Activated B cell treated with CpG ODN at 0.5 μM for 24 hours (primary cell): ENCODE measurements at regions of chr10 and their contacts with region 1.

Region 1: DNA sequence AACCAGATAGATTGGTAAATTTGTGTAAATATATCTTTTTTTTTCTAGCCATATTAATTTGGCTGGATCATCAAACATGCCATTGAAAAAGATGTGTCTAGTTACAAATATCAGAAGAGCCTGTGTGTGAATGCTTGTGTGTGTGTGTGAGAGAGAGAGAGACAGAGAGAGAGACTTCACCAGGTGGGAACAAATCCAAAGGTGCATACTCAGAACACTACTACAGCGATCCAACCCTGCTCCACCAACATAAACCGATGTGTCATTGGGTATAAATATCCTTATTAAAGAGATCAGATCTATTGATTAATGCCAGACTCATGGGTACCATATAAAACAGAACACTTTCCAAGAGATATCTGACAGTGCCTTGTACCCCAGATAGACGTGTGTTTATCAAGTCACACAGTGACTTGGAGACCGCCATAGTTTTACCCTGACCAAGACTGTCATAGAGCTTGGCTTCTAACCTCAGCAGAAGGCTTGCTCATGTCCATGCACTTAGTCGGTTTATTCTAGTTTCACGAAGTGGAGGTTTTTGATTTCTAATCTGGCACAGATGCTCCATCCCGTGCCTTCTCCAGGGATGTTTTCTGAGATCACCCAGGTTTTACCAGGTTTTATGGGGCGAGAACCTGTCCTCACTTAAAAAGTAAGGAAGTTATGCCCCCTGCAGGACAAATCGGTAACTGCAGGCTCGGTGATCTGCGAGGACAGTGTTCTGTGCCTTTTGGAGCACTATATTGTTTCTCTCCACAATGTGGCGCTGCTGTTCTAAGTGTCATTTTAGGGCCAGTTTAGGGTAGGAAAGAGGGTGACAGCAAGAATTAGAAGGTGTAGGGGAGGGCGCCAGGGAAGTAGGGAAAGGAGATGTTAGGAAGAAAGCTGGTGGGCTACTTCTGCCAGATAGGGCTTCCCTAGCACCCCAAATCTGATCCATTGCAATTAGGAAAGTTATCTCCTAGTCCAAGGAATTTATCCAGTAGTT is 29.3 kb upstream of the WNT8B start:
- DNase-seq: peak; percentile 80
- ATAC-seq: peak; percentile 99
- H3K4me3 Mint-ChIP-seq: no peak overlapping the region
- H3K27ac Mint-ChIP-seq: no peak overlapping the region
- H3K4me1 Mint-ChIP-seq: no peaks in the 10 kb centered on the region
- H3K27me3 Mint-ChIP-seq: peaks cover 8% of the 10 kb centered on the region
- CTCF ChIP-seq: peak; percentile 99

Region 2: DNA sequence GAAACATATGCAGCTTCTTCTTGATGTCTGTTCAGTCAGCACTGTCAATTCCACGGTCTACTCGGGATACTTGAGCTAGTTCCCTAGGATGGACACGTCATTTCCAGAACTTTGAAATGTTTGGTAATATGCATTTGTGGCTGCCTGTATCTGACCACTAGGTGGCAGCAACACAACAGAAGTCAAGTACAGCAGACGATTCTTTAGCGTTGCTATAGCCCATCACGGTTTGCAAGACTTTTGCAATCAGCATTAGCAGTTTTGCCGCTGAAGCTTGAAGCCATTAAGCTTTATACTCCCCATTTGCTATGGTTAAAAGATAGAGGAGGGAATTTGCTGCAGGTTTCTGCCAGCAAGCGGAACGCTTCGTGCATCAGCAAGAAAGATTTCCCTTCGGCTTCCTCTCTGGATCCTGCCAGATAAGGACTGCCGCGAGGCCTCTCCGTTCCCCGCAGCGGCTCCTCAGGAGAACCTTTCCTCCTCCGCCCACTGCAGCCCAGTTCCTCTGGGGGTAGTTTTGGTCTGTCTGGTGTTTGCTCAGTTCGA is 587.6 kb before region 1 on chr10:
- CTCF ChIA-PET with region 1: no interaction called
- POLR2A ChIA-PET with region 1: no interaction called
- intact Hi-C with region 1: loop called (anchors 1 kb)
- DNase-seq: peak; percentile 28
- ATAC-seq: peak; percentile 77
- H3K4me3 Mint-ChIP-seq: peak overlapping the region; percentile 50
- H3K27ac Mint-ChIP-seq: no peak overlapping the region
- H3K4me1 Mint-ChIP-seq: peaks cover 8% of the 10 kb centered on the region
- H3K27me3 Mint-ChIP-seq: no peaks in the 10 kb centered on the region
- CTCF ChIP-seq: no peak

Region 3: DNA sequence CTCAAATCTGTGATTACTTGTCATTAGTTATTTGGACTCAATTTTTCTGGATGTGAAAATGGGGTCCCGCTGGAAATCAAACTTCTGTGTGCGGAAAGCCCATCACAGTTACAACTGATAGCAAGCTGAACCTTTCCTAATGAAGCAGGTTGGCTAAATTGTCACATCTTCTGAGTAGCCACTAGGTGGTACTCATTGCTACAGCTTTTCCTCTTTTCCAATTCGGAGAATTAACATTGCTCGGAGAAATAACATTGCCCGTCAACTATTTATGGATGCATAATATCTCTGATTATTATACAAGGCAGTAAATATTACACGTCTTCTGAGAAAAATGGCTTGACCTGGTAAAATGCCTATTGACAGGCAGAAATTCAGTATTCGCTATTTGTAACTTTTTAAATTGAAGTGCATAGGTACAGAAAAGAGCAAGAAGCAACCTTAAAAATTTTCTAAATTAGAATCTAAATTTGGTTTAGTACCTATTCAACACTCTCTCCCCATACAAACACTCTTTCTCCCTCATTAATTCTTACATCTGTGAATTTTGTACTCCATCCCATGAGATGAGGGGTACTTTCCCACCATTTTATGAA is 129.7 kb before region 1 on chr10:
- CTCF ChIA-PET with region 1: interaction called, 24 read pairs
- POLR2A ChIA-PET with region 1: no interaction called
- intact Hi-C with region 1: loop called (anchors 1 kb)
- DNase-seq: no peak
- ATAC-seq: no peak
- H3K4me3 Mint-ChIP-seq: no peak overlapping the region
- H3K27ac Mint-ChIP-seq: no peak overlapping the region
- H3K4me1 Mint-ChIP-seq: no peaks in the 10 kb centered on the region
- H3K27me3 Mint-ChIP-seq: peaks cover 35% of the 10 kb centered on the region
- CTCF ChIP-seq: peak; percentile 36

Region 4: GRCh38 chr10:100373298-100374136 is 60.0 kb before region 1 on chr10:
- CTCF ChIA-PET with region 1: interaction called, 5 read pairs
- POLR2A ChIA-PET with region 1: no interaction called
- intact Hi-C with region 1: loop called (anchors 5 kb)
- DNase-seq: peak; percentile 61
- ATAC-seq: peak; percentile 98
- H3K4me3 Mint-ChIP-seq: no peak overlapping the region
- H3K27ac Mint-ChIP-seq: no peak overlapping the region
- H3K4me1 Mint-ChIP-seq: peaks cover 33% of the 10 kb centered on the region
- H3K27me3 Mint-ChIP-seq: no peaks in the 10 kb centered on the region
- CTCF ChIP-seq: no peak

Region 5: DNA sequence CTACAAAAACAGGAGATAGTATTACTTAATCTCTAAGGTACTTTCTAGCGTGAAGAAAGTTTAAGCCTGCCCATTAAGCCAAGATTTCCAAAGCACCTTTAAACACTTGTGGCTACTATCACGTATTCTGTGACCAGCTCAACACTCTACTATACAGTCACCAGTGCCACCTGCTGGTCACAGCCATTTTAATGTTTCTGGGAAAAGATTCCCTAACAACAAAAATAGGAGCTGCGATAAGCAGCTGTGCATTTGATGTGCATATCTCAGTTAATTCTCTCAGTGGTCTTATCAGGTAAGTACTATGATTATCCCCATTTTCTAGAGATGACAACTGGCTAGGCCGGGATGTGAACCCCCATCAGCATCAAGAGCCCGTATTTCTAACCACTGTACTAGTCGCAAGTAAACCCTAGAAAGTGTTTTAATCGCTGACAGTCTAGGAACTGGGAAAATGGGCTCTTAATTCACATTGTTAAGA is 85.3 kb after region 1 on chr10:
- CTCF ChIA-PET with region 1: interaction called, 12 read pairs
- POLR2A ChIA-PET with region 1: no interaction called
- intact Hi-C with region 1: loop called (anchors 1 kb)
- DNase-seq: no peak
- ATAC-seq: peak; percentile 54
- H3K4me3 Mint-ChIP-seq: no peak overlapping the region
- H3K27ac Mint-ChIP-seq: no peak overlapping the region
- H3K4me1 Mint-ChIP-seq: peaks cover 9% of the 10 kb centered on the region
- H3K27me3 Mint-ChIP-seq: peaks cover 10% of the 10 kb centered on the region
- CTCF ChIP-seq: no peak

Region 6: DNA sequence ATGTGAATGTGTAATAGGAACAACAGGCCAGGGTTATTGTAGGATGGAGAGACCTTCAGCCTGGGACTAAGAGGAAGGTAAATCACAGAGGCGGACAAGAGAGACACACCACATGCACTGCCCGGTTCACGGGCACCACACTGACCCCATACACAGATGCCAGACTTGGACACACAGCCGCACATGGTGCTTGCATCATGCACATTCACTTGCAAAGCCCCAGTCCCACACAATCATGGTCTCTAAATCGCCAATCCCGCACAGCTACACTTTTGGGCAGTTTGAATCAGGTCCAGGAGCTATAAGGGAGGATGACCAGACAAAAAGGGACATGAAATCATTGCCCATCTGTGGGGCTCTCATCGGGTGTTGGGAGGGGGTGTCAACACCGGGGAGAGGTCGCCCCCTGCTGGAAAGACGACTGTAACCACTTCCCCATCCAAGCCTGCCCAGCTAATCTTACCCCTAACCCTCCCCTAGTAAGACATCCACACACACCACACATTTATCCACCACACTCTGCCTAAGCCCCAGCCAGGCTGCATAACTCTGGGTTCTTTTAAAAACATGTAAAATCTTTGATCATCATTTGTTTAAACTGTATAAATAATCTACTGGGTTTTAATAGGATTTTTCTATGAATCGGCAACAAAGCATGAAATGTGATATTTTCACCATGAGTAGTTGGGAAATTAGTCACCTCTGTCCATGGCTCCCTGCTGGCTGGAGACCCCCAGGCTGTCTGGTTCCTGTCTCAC is 438.7 kb after region 1 on chr10:
- CTCF ChIA-PET with region 1: no interaction called
- POLR2A ChIA-PET with region 1: no interaction called
- intact Hi-C with region 1: no loop called
- DNase-seq: peak; percentile 37
- ATAC-seq: peak; percentile 65
- H3K4me3 Mint-ChIP-seq: no peak overlapping the region
- H3K27ac Mint-ChIP-seq: no peak overlapping the region
- H3K4me1 Mint-ChIP-seq: no peaks in the 10 kb centered on the region
- H3K27me3 Mint-ChIP-seq: peaks cover 23% of the 10 kb centered on the region
- CTCF ChIP-seq: no peak

Region 7: GRCh38 chr10:101258179-101258885 is 824.8 kb after region 1 on chr10:
- CTCF ChIA-PET with region 1: no interaction called
- POLR2A ChIA-PET with region 1: no interaction called
- intact Hi-C with region 1: no loop called
- DNase-seq: no peak
- ATAC-seq: no peak
- H3K4me3 Mint-ChIP-seq: no peak overlapping the region
- H3K27ac Mint-ChIP-seq: no peak overlapping the region
- H3K4me1 Mint-ChIP-seq: no peaks in the 10 kb centered on the region
- H3K27me3 Mint-ChIP-seq: peaks cover 47% of the 10 kb centered on the region
- CTCF ChIP-seq: no peak